ENCODE measurements at regions of chr7 and their contacts with region 1.

Region 1: GRCh38 chr7:95476904-95477594 is 8.7 kb upstream of the ASB4 start:
- DNase-seq: peak; percentile 79
- H3K4me3 Mint-ChIP-seq: no peak overlapping the region
- H3K27ac Mint-ChIP-seq: no peak overlapping the region
- H3K4me1 Mint-ChIP-seq: peaks cover 10% of the 10 kb centered on the region
- H3K27me3 Mint-ChIP-seq: no peaks in the 10 kb centered on the region
- CTCF ChIP-seq: peak; percentile 72

Region 2: DNA sequence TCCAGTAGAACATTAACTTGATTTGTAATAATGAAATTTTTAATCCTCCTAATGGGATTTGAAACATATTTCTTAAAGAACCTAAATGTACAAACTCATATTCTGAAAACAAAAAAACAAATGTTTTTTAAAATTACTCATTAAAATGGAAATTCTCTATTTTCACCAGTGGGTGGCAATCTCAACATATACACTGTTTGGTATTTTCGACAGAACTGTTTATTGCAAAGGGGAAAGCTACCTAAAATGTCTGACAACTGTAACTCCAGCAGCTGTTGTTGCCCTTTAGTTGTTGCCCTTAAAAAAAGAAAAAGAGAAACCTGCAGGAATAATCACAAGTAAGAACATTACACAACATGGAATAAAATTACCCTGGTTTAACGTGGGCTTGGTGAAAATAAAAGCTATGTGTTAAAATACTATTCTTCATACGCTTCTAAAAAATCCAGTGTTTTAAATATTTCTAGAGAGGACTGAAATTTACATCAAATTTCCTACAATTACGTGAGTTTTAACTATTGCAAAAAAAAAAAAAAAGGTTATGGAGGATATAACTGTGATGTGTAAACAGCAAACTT is 1027.8 kb before region 1 on chr7:
- CTCF ChIA-PET with region 1: interaction called, 61 read pairs
- POLR2A ChIA-PET with region 1: interaction called, 3 read pairs
- intact Hi-C with region 1: loop called (anchors 1 kb)
- DNase-seq: peak; percentile 47
- H3K4me3 Mint-ChIP-seq: no peak overlapping the region
- H3K27ac Mint-ChIP-seq: no peak overlapping the region
- H3K4me1 Mint-ChIP-seq: no peaks in the 10 kb centered on the region
- H3K27me3 Mint-ChIP-seq: peaks cover 15% of the 10 kb centered on the region
- CTCF ChIP-seq: peak; percentile 52

Region 3: GRCh38 chr7:95357623-95358022 is 119.4 kb before region 1 on chr7:
- CTCF ChIA-PET with region 1: interaction called, 4 read pairs
- POLR2A ChIA-PET with region 1: no interaction called
- intact Hi-C with region 1: loop called (anchors 5 kb)
- DNase-seq: no peak
- H3K4me3 Mint-ChIP-seq: no peak overlapping the region
- H3K27ac Mint-ChIP-seq: no peak overlapping the region
- H3K4me1 Mint-ChIP-seq: peaks cover 6% of the 10 kb centered on the region
- H3K27me3 Mint-ChIP-seq: no peaks in the 10 kb centered on the region
- CTCF ChIP-seq: no peak

Region 4: DNA sequence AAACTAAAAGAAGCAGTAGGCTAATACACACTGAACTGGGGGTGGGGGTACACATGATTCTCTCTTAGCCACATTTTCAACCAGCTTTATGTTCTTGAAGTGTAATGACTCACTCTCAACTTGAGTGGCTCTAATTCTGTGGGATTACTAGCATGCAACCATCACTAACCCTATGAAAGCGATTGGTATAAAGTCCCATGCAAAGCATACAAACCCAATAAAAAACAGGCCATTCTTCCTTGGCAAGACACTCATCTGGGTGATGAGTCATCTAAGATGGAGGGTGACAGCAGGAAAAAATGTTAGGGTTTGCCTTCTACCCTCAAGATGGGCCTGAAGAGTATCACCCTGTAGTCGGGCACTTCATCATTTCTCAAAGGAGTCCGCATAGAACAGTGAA is 66.0 kb before region 1 on chr7:
- CTCF ChIA-PET with region 1: interaction called, 15 read pairs
- POLR2A ChIA-PET with region 1: interaction called, 3 read pairs
- intact Hi-C with region 1: loop called (anchors 10 kb)
- DNase-seq: no peak
- H3K4me3 Mint-ChIP-seq: no peak overlapping the region
- H3K27ac Mint-ChIP-seq: peak overlapping the region; percentile 54
- H3K4me1 Mint-ChIP-seq: peaks cover 5% of the 10 kb centered on the region
- H3K27me3 Mint-ChIP-seq: no peaks in the 10 kb centered on the region
- CTCF ChIP-seq: no peak

Region 5: DNA sequence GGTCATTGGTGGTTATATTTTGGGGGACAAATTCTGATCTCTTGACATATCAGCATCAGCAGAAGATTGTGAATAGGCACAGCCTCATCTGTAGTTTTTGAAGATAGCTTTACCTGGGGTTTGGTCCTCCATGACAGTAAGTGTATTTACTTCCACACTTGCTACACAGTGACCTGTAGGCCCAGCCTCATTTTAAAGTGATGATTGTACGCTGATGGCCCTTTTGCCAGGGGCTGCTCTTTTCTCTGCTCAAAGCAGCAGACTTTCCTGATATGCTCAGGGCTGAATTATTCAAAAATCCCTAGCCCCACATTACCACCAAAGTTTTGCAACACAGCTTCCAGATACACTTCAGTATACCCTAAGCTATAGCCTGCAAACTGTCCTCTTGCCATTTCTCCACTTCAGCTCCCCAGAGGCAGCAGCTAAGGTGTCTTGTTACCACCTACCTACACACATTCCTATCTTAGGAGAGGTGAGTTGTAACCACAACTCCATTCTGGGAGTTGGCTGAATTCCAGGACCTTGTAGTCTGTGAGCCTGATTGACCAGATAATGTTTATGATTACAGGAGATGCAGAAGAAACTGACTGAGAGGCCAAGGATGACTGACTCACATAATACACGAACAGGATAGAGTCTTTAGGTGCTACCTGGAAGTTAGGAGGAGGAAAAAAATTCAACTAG is 14.7 kb after region 1 on chr7:
- CTCF ChIA-PET with region 1: interaction called, 66 read pairs
- POLR2A ChIA-PET with region 1: interaction called, 8 read pairs
- intact Hi-C with region 1: no loop called
- DNase-seq: peak; percentile 96
- H3K4me3 Mint-ChIP-seq: no peak overlapping the region
- H3K27ac Mint-ChIP-seq: peak overlapping the region; percentile 23
- H3K4me1 Mint-ChIP-seq: peaks cover 24% of the 10 kb centered on the region
- H3K27me3 Mint-ChIP-seq: no peaks in the 10 kb centered on the region
- CTCF ChIP-seq: no peak

Region 6: GRCh38 chr7:95608359-95609173 is 131.5 kb after region 1 on chr7:
- CTCF ChIA-PET with region 1: no interaction called
- POLR2A ChIA-PET with region 1: no interaction called
- intact Hi-C with region 1: no loop called
- DNase-seq: peak; percentile 95
- H3K4me3 Mint-ChIP-seq: peak overlapping the region; percentile 53
- H3K27ac Mint-ChIP-seq: peak overlapping the region; percentile 90
- H3K4me1 Mint-ChIP-seq: peaks cover 13% of the 10 kb centered on the region
- H3K27me3 Mint-ChIP-seq: no peaks in the 10 kb centered on the region
- CTCF ChIP-seq: no peak

Measured in MCF 10A (cell line).